ENCODE measurements at regions of chr11 and their contacts with region 1.

Region 1: DNA sequence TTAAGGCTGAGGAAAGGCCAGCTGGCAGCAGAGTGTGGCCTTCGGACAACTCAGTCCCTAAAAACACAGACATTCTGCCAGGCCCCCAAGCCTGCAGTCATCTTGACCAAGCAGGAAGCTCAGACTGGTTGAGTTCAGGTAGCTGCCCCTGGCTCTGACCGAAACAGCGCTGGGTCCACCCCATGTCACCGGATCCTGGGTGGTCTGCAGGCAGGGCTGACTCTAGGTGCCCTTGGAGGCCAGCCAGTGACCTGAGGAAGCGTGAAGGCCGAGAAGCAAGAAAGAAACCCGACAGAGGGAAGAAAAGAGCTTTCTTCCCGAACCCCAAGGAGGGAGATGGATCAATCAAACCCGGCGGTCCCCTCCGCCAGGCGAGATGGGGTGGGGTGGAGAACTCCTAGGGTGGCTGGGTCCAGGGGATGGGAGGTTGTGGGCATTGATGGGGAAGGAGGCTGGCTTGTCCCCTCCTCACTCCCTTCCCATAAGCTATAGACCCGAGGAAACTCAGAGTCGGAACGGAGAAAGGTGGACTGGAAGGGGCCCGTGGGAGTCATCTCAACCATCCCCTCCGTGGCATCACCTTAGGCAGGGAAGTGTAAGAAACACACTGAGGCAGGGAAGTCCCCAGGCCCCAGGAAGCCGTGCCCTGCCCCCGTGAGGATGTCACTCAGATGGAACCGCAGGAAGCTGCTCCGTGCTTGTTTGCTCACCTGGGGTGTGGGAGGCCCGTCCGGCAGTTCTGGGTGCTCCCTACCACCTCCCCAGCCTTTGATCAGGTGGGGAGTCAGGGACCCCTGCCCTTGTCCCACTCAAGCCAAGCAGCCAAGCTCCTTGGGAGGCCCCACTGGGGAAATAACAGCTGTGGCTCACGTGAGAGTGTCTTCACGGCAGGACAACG is 11.7 kb downstream of the CXCR5 start:
- DNase-seq: peak; percentile 68
- ATAC-seq: peak; percentile 60
- H3K4me3 Mint-ChIP-seq: no peak overlapping the region
- H3K27ac Mint-ChIP-seq: peak overlapping the region; percentile 73
- H3K4me1 Mint-ChIP-seq: peaks cover 41% of the 10 kb centered on the region
- H3K27me3 Mint-ChIP-seq: no peaks in the 10 kb centered on the region

Region 2: GRCh38 chr11:118715245-118715831 is 180.1 kb before region 1 on chr11:
- CTCF ChIA-PET with region 1: no interaction called
- DNase-seq: no peak
- ATAC-seq: peak; percentile 9
- H3K4me3 Mint-ChIP-seq: no peak overlapping the region
- H3K27ac Mint-ChIP-seq: no peak overlapping the region
- H3K4me1 Mint-ChIP-seq: no peaks in the 10 kb centered on the region
- H3K27me3 Mint-ChIP-seq: peaks cover 3% of the 10 kb centered on the region

Region 3: GRCh38 chr11:118757876-118758399 is 137.5 kb before region 1 on chr11:
- CTCF ChIA-PET with region 1: no interaction called
- DNase-seq: no peak
- ATAC-seq: no peak
- H3K4me3 Mint-ChIP-seq: no peak overlapping the region
- H3K27ac Mint-ChIP-seq: no peak overlapping the region
- H3K4me1 Mint-ChIP-seq: peaks cover 3% of the 10 kb centered on the region
- H3K27me3 Mint-ChIP-seq: no peaks in the 10 kb centered on the region

Region 4: GRCh38 chr11:118907051-118908042 is 12.0 kb after region 1 on chr11:
- CTCF ChIA-PET with region 1: interaction called, 15 read pairs
- DNase-seq: peak; percentile 91
- ATAC-seq: peak; percentile 79
- H3K4me3 Mint-ChIP-seq: no peak overlapping the region
- H3K27ac Mint-ChIP-seq: no peak overlapping the region
- H3K4me1 Mint-ChIP-seq: peaks cover 27% of the 10 kb centered on the region
- H3K27me3 Mint-ChIP-seq: no peaks in the 10 kb centered on the region

Region 5: DNA sequence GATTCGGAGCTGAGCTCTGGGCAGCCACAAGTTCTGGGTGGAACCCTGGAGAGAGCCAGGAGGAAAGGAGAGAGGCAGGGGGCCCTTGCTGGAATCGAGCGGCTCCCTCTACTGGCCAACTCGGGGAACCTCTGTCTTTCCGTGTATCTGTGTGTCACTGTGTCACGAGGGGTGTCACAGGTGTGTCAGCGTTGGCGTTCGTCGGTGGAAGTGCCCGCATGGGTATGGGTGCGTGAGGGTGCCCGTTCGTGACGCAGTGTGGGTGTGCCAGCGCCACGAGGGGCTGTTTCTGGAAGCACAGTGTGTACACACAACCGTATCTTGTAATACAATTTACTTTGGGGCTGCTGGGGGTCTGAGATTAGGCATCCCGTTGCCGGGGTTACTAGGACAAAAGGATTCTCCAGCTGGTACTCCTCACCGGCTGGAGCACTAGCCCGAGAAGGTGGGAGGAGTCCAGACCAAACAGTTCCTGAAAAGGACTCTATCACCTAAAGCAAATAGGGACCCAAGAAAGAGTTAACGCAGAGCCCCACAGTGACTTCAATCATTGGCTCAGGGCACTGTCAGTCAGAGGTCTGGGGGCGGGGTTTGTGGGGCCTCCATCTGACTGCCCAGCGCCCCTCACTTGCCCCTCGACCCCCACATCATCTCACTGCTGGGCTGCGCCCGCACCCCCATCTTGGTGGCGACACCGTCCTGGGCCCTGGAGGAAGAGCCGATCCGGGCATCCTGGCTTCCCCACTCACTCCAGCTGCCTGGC is 32.9 kb after region 1 on chr11:
- CTCF ChIA-PET with region 1: interaction called, 15 read pairs
- DNase-seq: peak; percentile 94
- ATAC-seq: peak; percentile 60
- H3K4me3 Mint-ChIP-seq: peak overlapping the region; percentile 92
- H3K27ac Mint-ChIP-seq: peak overlapping the region; percentile 98
- H3K4me1 Mint-ChIP-seq: peaks cover 44% of the 10 kb centered on the region
- H3K27me3 Mint-ChIP-seq: no peaks in the 10 kb centered on the region

Region 6: GRCh38 chr11:118948000-118948399 is 52.6 kb after region 1 on chr11:
- CTCF ChIA-PET with region 1: no interaction called
- DNase-seq: no peak
- ATAC-seq: no peak
- H3K4me3 Mint-ChIP-seq: no peak overlapping the region
- H3K27ac Mint-ChIP-seq: no peak overlapping the region
- H3K4me1 Mint-ChIP-seq: peaks cover 4% of the 10 kb centered on the region
- H3K27me3 Mint-ChIP-seq: peaks cover 9% of the 10 kb centered on the region

Region 7: DNA sequence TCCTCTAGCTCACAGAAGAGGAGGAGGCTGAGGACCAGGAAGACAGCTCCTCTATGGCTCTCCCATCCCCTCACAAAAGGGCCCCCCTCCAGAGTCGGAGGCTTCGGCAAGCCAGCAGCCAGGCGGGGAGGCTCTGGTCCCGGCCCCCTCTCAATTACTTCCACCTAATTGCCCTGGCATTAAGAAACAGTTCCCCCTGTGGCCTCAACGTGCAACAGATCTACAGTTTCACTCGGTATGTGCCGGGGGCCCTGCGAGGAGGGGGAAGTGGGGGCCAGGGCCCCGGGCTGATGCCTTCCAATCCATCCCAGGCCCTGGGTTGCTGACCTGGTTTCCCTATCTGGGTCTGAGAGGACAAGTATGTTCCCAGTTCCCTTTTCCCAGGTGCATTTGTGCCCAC is 84.0 kb after region 1 on chr11:
- CTCF ChIA-PET with region 1: no interaction called
- DNase-seq: no peak
- ATAC-seq: no peak
- H3K4me3 Mint-ChIP-seq: no peak overlapping the region
- H3K27ac Mint-ChIP-seq: no peak overlapping the region
- H3K4me1 Mint-ChIP-seq: no peaks in the 10 kb centered on the region
- H3K27me3 Mint-ChIP-seq: peaks cover 18% of the 10 kb centered on the region